ENCODE measurements at regions of chr3 and their contacts with region 1.

Region 1: DNA sequence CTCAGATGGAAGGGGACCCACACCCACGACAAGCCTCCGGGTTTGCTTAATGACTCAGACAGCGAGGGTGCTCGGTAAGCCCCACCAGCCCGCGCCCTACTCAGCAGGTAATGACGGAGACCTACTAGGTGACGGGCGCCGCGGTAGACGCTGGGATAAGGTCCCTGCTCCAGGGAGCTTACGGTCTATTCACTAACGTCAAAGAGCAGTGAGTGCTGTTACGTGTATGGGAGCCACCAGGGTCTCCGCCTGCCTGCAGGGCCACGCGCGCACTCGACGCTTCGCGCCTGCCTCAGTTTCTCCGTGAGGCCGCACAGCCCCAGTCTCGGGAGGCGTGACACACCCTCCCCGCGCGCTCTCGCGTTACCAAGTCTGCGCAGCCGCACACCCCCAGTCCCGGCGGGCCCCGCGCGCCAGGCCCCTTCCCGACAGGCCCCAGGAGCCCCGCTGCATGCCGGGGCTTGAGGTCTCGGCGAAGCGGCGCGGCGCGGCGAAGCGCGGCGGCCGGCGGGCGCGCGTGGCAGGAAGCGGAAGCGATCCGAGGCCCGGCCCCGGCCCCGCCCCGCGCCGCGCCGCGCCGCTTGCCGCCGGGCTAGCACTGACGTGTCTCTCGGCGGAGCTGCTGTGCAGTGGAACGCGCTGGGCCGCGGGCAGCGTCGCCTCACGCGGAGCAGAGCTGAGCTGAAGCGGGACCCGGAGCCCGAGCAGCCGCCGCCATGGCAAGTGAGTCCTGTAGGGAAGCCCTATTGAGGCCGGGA is at the start of gene SEC61A1:
- DNase-seq: peak; percentile 95
- ATAC-seq: peak; percentile 95
- H3K4me3 ChIP-seq: peak within 1 kb of the TSS; percentile 82 to 97 (median 92)
- H3K4me3 Mint-ChIP-seq: peak within 1 kb of the TSS; percentile 95
- H3K27ac ChIP-seq: peak within 1 kb of the TSS; percentile 61 to 90
- H3K27ac Mint-ChIP-seq: peak within 1 kb of the TSS; percentile 92
- H3K4me1 ChIP-seq: peaks cover 31 to 32% of the 10 kb centered on the region in 2 donors
- H3K4me1 Mint-ChIP-seq: peaks cover 40% of the 10 kb centered on the region
- H3K27me3 ChIP-seq: no peaks in the 10 kb centered on the region
- H3K27me3 Mint-ChIP-seq: peaks cover 1% of the 10 kb centered on the region
- CTCF ChIP-seq: no peak
- total RNA-seq, gene SEC61A1: 68.9 and 79.4 TPM in 2 replicates

Region 2: DNA sequence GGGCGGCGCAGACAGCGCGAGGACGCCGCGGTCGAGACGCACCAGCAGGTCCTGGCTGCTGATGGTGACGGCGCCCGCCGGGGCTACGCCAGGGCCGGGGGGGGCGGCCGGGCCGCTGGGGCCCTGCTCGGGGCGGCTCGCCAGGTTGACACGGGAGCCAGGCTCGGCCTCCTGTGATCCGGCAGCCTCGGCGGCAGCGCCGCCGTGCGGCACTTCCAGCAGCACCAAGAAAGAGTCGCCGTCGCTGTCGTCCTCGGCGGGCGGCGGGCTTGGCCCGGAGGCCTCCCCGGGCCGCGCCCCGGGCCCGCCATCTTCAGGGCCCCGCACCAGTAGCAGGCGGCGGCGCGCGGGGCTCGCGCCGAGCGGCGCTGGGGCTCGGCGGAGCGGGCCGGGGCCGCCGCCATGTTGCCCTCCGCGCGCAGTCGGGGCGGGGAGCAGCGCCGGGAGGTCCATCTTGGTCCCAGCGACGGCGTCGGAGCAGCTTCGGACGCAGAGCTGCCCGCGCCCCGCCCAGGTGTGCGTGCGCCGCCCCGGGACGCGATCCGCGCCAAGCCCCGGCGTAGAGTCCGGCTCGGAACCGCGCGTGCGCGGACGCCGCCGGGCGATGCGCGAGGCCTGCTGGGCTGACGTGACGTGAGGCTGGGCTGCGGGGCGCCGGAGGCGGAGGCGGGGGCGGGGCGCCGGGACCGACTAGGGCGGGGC is 1576.5 kb before region 1 on chr3 and contains the start of gene ZXDC:
- CTCF ChIA-PET with region 1: no interaction called
- POLR2A ChIA-PET with region 1: no interaction called
- intact Hi-C with region 1: loop called (anchors 5 kb)
- DNase-seq: peak; percentile 96
- ATAC-seq: peak; percentile 84
- H3K4me3 ChIP-seq: peak within 1 kb of the TSS; percentile 51 to 84 (median 65)
- H3K4me3 Mint-ChIP-seq: peak within 1 kb of the TSS; percentile 89
- H3K27ac ChIP-seq: peak within 1 kb of the TSS; percentile 61 to 73
- H3K27ac Mint-ChIP-seq: peak within 1 kb of the TSS; percentile 91
- H3K4me1 ChIP-seq: peaks cover 35 to 39% of the 10 kb centered on the region in 2 donors
- H3K4me1 Mint-ChIP-seq: peaks cover 40% of the 10 kb centered on the region
- H3K27me3 ChIP-seq: no peaks in the 10 kb centered on the region
- H3K27me3 Mint-ChIP-seq: no peaks in the 10 kb centered on the region
- CTCF ChIP-seq: peak; percentile 29
- total RNA-seq, gene ZXDC: 70.9 and 75.9 TPM in 2 replicates

Region 3: GRCh38 chr3:126982471-126983175 is 1069.4 kb before region 1 on chr3 and contains the start of gene PLXNA1:
- CTCF ChIA-PET with region 1: no interaction called
- POLR2A ChIA-PET with region 1: no interaction called
- intact Hi-C with region 1: loop called (anchors 5 kb)
- DNase-seq: peak; percentile 96
- ATAC-seq: peak; percentile 73
- H3K4me3 ChIP-seq: peak within 1 kb of the TSS in 4 of 5 experiments; percentile 56 to 74 (median 64)
- H3K4me3 Mint-ChIP-seq: peak within 1 kb of the TSS; percentile 97
- H3K27ac ChIP-seq: peak within 1 kb of the TSS; percentile 97
- H3K27ac Mint-ChIP-seq: peak within 1 kb of the TSS; percentile 97
- H3K4me1 ChIP-seq: peaks cover 17 to 24% of the 10 kb centered on the region in 2 donors
- H3K4me1 Mint-ChIP-seq: peaks cover 19% of the 10 kb centered on the region
- H3K27me3 ChIP-seq: peaks cover 0 to 33% (median 9%) of the 10 kb centered on the region in 4 experiments
- H3K27me3 Mint-ChIP-seq: peaks cover 13% of the 10 kb centered on the region
- CTCF ChIP-seq: peak; percentile 96
- total RNA-seq, gene PLXNA1: 22.3 and 24.2 TPM in 2 replicates

Region 4: GRCh38 chr3:127233371-127233770 is 818.6 kb before region 1 on chr3:
- CTCF ChIA-PET with region 1: no interaction called
- POLR2A ChIA-PET with region 1: no interaction called
- intact Hi-C with region 1: no loop called
- DNase-seq: no peak
- ATAC-seq: no peak
- H3K4me3 ChIP-seq: no peak overlapping the region
- H3K4me3 Mint-ChIP-seq: no peak overlapping the region
- H3K27ac ChIP-seq: no peak overlapping the region
- H3K27ac Mint-ChIP-seq: no peak overlapping the region
- H3K4me1 ChIP-seq: no peaks in the 10 kb centered on the region
- H3K4me1 Mint-ChIP-seq: no peaks in the 10 kb centered on the region
- H3K27me3 ChIP-seq: no peaks in the 10 kb centered on the region
- H3K27me3 Mint-ChIP-seq: peaks cover 6% of the 10 kb centered on the region
- CTCF ChIP-seq: no peak

Region 5: DNA sequence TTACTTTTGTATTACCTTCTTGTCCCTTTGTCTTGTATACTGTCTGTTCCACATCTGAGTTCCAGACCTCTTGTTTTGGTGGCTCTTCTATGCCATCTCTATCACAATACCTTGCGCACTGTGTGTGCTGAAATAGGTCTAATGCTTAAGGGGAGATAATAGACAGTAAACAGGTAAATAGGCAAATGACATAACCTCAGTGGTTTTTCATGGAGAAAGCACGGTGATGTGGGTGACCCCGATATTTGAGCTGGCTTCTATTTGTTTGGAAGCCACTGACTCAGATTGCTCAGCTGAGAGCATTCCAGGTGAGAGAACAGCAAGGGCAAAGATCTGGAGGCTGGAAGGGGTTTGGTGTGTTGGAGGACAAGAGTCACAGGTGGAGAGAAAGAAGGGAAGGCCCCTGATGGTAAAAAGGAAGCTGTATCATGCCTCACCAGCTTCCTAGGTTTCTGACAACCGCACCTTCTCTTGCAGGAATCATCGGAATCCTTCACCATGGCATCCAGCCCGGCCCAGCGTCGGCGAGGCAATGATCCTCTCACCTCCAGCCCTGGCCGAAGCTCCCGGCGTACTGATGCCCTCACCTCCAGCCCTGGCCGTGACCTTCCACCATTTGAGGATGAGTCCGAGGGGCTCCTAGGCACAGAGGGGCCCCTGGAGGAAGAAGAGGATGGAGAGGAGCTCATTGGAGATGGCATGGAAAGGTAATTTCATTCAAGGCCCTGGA is 453.0 kb before region 1 on chr3:
- CTCF ChIA-PET with region 1: no interaction called
- POLR2A ChIA-PET with region 1: no interaction called
- intact Hi-C with region 1: loop called (anchors 1 kb)
- DNase-seq: no peak
- ATAC-seq: no peak
- H3K4me3 ChIP-seq: peak overlapping the region; percentile 36 to 65 (median 57)
- H3K4me3 Mint-ChIP-seq: peak overlapping the region; percentile 82
- H3K27ac ChIP-seq: peak overlapping the region; percentile 75 to 87
- H3K27ac Mint-ChIP-seq: peak overlapping the region; percentile 97
- H3K4me1 ChIP-seq: peaks cover 10 to 16% of the 10 kb centered on the region in 2 donors
- H3K4me1 Mint-ChIP-seq: peaks cover 24% of the 10 kb centered on the region
- H3K27me3 ChIP-seq: no peaks in the 10 kb centered on the region
- H3K27me3 Mint-ChIP-seq: no peaks in the 10 kb centered on the region
- CTCF ChIP-seq: no peak

Region 6: DNA sequence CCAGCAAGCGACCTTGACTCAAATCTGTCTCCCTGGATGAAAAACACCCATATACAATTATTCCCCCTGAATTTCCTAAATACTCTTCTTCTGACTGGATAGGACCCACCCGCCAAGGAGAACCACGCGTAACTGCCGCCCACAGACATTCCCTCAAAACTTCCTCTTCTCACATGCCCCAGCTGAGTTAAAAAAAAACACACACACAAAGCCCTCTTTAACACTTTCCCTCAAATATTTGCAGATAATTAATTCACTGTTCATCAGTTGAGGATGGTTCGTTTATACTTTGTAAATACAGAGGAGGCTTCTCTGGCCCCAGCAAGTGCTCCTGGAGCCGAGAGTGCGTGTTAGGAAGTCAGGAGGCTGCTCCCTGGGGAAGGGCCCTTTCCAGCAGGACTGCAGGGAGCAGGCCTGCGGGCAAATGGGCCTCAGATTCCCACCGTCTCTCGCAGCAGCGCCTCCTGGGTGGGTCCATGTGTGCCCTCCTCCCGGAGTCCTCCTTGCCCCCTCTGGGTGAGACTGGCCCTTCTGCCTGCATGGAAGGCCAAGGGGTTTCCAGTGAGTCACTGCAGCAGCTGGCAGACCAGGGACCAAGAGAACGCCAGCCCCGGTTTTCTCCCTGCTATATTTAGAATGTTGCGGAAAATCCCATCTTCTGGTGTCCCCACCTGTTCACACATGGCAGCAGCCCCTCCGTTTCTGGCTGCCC is 276.5 kb before region 1 on chr3:
- CTCF ChIA-PET with region 1: no interaction called
- POLR2A ChIA-PET with region 1: no interaction called
- intact Hi-C with region 1: no loop called
- DNase-seq: peak; percentile 30
- ATAC-seq: peak; percentile 41
- H3K4me3 ChIP-seq: no peak overlapping the region
- H3K4me3 Mint-ChIP-seq: peak overlapping the region; percentile 41
- H3K27ac ChIP-seq: no peak overlapping the region
- H3K27ac Mint-ChIP-seq: no peak overlapping the region
- H3K4me1 ChIP-seq: peaks cover 13 to 17% of the 10 kb centered on the region in 2 donors
- H3K4me1 Mint-ChIP-seq: peaks cover 25% of the 10 kb centered on the region
- H3K27me3 ChIP-seq: no peaks in the 10 kb centered on the region
- H3K27me3 Mint-ChIP-seq: no peaks in the 10 kb centered on the region
- CTCF ChIP-seq: no peak

Region 7: DNA sequence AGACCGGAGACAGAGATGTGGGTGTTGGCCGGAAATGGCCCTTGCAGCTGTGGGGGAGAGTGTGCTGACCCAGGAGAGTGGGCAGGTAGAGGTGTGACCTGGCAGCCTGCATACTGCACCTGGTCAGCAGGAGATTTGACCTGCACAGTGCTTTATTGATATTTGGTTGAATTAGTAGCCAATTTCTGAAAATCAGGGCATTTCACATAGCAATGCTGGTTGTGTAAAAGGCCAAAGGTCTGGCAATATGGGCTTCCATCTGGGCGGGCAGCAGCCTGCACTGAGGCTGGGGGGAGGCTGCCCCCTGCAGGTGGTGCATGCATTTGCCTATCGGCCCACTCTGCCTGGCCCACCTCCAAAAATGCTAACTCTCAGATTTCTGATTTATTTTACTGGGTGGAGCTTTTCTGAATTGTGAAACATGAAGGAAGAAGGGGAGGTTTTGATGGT is 220.3 kb before region 1 on chr3:
- CTCF ChIA-PET with region 1: no interaction called
- POLR2A ChIA-PET with region 1: no interaction called
- intact Hi-C with region 1: no loop called
- DNase-seq: peak; percentile 50
- ATAC-seq: peak; percentile 40
- H3K4me3 ChIP-seq: no peak overlapping the region
- H3K4me3 Mint-ChIP-seq: no peak overlapping the region
- H3K27ac ChIP-seq: no peak overlapping the region
- H3K27ac Mint-ChIP-seq: no peak overlapping the region
- H3K4me1 ChIP-seq: peaks cover 13 to 28% of the 10 kb centered on the region in 2 donors
- H3K4me1 Mint-ChIP-seq: peaks cover 26% of the 10 kb centered on the region
- H3K27me3 ChIP-seq: no peaks in the 10 kb centered on the region
- H3K27me3 Mint-ChIP-seq: no peaks in the 10 kb centered on the region
- CTCF ChIP-seq: peak; percentile 54

Region 8: DNA sequence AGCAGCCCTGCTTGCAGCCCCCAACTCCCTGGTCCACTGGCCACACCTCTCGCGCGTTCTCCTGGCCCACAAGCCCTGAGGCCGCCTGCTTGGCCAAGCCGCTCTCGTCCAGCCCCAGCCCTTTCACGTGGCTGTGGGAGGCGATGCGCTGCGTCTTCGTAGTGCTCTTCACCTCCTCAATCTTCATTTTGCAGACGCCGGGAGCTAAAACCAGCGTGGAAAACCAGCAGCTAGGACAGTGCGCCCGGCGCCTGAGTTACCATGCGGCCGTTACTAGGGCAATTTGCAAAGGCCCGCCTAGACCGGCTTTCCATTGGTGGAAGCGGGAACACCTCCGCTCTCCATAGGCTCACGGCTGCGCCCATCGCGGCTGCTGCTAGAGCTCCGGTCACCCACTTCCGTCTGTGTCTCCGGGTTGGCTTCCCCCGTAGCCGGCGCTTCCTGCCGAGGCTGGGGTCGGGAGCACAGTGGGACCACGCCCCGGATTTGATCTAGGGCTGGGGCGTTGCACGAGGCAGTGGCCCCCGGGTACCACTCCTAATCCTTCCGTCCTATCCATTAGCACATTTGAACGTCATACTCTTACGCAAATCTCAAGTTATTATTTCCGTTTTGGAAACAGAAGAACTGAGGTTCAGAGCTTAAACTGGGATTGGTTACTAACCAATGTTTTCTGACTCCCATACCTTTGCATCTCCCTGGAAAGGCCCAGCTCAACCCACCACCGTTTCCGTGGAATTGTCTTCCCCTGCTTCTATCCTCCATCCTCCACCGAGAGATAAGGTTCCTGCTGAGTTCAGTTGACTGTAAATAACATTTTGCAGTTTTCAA is 71.7 kb after region 1 on chr3 and contains the start of gene RUVBL1:
- CTCF ChIA-PET with region 1: no interaction called
- POLR2A ChIA-PET with region 1: interaction called, 3 read pairs
- intact Hi-C with region 1: loop called (anchors 1 kb)
- DNase-seq: peak; percentile 97
- ATAC-seq: peak; percentile 97
- H3K4me3 ChIP-seq: peak within 1 kb of the TSS; percentile 68 to 94 (median 85)
- H3K4me3 Mint-ChIP-seq: peak within 1 kb of the TSS; percentile 98
- H3K27ac ChIP-seq: peak within 1 kb of the TSS; percentile 79 to 84
- H3K27ac Mint-ChIP-seq: peak within 1 kb of the TSS; percentile 86
- H3K4me1 ChIP-seq: peaks cover 15 to 20% of the 10 kb centered on the region in 2 donors
- H3K4me1 Mint-ChIP-seq: peaks cover 22% of the 10 kb centered on the region
- H3K27me3 ChIP-seq: no peaks in the 10 kb centered on the region
- H3K27me3 Mint-ChIP-seq: no peaks in the 10 kb centered on the region
- CTCF ChIP-seq: no peak
- total RNA-seq, gene RUVBL1: 19.9 and 20.4 TPM in 2 replicates

Region 9: GRCh38 chr3:128879125-128879969 is 827.3 kb after region 1 on chr3 and contains the start of gene ACAD9:
- CTCF ChIA-PET with region 1: no interaction called
- POLR2A ChIA-PET with region 1: no interaction called
- intact Hi-C with region 1: loop called (anchors 2 kb)
- DNase-seq: peak; percentile 97
- ATAC-seq: peak; percentile 96
- H3K4me3 ChIP-seq: peak within 1 kb of the TSS; percentile 86 to 97 (median 88)
- H3K4me3 Mint-ChIP-seq: peak within 1 kb of the TSS; percentile 95
- H3K27ac ChIP-seq: peak within 1 kb of the TSS; percentile 93 to 98
- H3K27ac Mint-ChIP-seq: peak within 1 kb of the TSS; percentile 95
- H3K4me1 ChIP-seq: peaks cover 24 to 31% of the 10 kb centered on the region in 2 donors
- H3K4me1 Mint-ChIP-seq: peaks cover 55% of the 10 kb centered on the region
- H3K27me3 ChIP-seq: no peaks in the 10 kb centered on the region
- H3K27me3 Mint-ChIP-seq: no peaks in the 10 kb centered on the region
- CTCF ChIP-seq: no peak
- total RNA-seq, gene ACAD9: 57.6 and 71.8 TPM in 2 replicates

Region 10: DNA sequence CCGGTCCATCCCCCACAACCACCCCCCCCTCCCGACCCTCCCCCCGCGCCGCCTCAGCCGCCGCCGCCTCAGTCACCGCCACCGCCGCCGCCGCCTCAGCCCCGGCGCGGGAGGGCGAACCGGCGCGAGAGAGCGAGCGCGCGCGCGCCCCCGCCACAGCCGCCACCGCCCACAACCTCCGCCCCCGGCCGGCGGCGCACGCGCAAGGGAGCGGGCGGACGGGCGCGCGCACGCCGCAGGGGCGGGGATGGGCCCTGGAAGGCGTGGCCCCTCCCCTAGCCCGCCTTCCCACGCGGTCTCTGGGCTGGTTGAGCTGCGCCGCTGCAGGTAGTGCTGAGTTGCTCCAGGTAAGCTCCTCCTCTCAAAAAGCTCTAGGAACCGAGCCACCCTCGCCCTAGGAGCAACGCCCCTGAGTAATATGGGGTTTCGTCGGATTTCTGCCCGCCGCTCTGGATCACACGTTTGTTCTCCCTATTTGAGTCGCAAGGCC is 1841.6 kb after region 1 on chr3 and contains the start of gene TMCC1:
- CTCF ChIA-PET with region 1: no interaction called
- POLR2A ChIA-PET with region 1: no interaction called
- intact Hi-C with region 1: loop called (anchors 5 kb)
- DNase-seq: peak; percentile 94
- ATAC-seq: peak; percentile 87
- H3K4me3 ChIP-seq: peak within 1 kb of the TSS; percentile 79 to 97 (median 89)
- H3K4me3 Mint-ChIP-seq: peak within 1 kb of the TSS; percentile 93
- H3K27ac ChIP-seq: peak within 1 kb of the TSS; percentile 87 to 93
- H3K27ac Mint-ChIP-seq: peak within 1 kb of the TSS; percentile 90
- H3K4me1 ChIP-seq: peaks cover 30 to 34% of the 10 kb centered on the region in 2 donors
- H3K4me1 Mint-ChIP-seq: peaks cover 39% of the 10 kb centered on the region
- H3K27me3 ChIP-seq: no peaks in the 10 kb centered on the region
- H3K27me3 Mint-ChIP-seq: no peaks in the 10 kb centered on the region
- CTCF ChIP-seq: no peak
- total RNA-seq, gene TMCC1: 32.2 and 37.8 TPM in 2 replicates

Measured in B cell (primary cell).